CD4-positive, alpha-beta memory T cell (primary cell): ENCODE measurements at regions of chr9 and their contacts with region 1.

Region 1: DNA sequence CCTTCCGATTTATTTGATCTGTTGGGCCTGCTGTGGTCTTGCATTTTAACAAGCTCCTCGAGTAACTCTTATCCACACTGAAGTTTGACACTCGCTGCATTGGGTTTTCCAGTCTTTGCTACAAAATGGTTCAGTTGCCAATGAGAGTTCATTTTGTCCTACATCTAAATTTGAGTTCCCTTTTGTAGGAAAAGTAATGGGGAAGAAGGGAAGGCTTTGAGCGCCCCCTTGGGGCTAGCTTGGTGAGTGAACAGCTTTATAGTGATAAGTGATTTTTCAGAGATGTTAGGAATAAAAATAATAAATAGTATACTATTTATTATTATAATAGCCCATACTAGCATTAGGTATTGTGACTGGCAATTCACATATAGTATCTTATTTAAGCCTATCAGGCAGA is 89.9 kb upstream of the GNAQ start:
- DNase-seq: peak in 4 of 5 donors; percentile 44 to 56 (median 48)
- H3K4me3 ChIP-seq: no peak overlapping the region
- H3K4me3 Mint-ChIP-seq: no peak overlapping the region
- H3K27ac ChIP-seq: no peak overlapping the region
- H3K27ac Mint-ChIP-seq: peak overlapping the region; percentile 58 to 82 (median 69)
- H3K4me1 ChIP-seq: peaks cover 36% of the 10 kb centered on the region
- H3K4me1 Mint-ChIP-seq: peaks cover 30 to 53% (median 42%) of the 10 kb centered on the region in 4 donors
- H3K27me3 ChIP-seq: no peaks in the 10 kb centered on the region
- H3K27me3 Mint-ChIP-seq: no peaks in the 10 kb centered on the region

Region 2: GRCh38 chr9:77163884-77164283 is 957.6 kb before region 1 on chr9:
- CTCF ChIA-PET with region 1: no interaction called
- POLR2A ChIA-PET with region 1: no interaction called
- intact Hi-C with region 1: loop called (anchors 5 kb)
- DNase-seq: no peak
- H3K4me3 ChIP-seq: no peak overlapping the region
- H3K4me3 Mint-ChIP-seq: no peak overlapping the region
- H3K27ac ChIP-seq: no peak overlapping the region
- H3K27ac Mint-ChIP-seq: no peak overlapping the region
- H3K4me1 ChIP-seq: no peaks in the 10 kb centered on the region
- H3K4me1 Mint-ChIP-seq: peaks cover 0 to 4% (median 2%) of the 10 kb centered on the region in 4 donors
- H3K27me3 ChIP-seq: no peaks in the 10 kb centered on the region
- H3K27me3 Mint-ChIP-seq: peaks cover 5 to 7% of the 10 kb centered on the region in 2 donors

Region 3: GRCh38 chr9:77841739-77842386 is 279.6 kb before region 1 on chr9:
- CTCF ChIA-PET with region 1: interaction called, 15 read pairs
- POLR2A ChIA-PET with region 1: interaction called, 4 read pairs
- intact Hi-C with region 1: loop called (anchors 1 kb)
- DNase-seq: peak in 2 of 5 donors; percentile 3 to 9
- H3K4me3 ChIP-seq: no peak overlapping the region
- H3K4me3 Mint-ChIP-seq: no peak overlapping the region
- H3K27ac ChIP-seq: no peak overlapping the region
- H3K27ac Mint-ChIP-seq: peak overlapping the region in 2 of 7 donors; percentile 13 to 39
- H3K4me1 ChIP-seq: no peaks in the 10 kb centered on the region
- H3K4me1 Mint-ChIP-seq: peaks cover 7 to 23% (median 10%) of the 10 kb centered on the region in 4 donors
- H3K27me3 ChIP-seq: no peaks in the 10 kb centered on the region
- H3K27me3 Mint-ChIP-seq: no peaks in the 10 kb centered on the region

Region 4: GRCh38 chr9:77909306-77909705 is 212.2 kb before region 1 on chr9:
- CTCF ChIA-PET with region 1: no interaction called
- POLR2A ChIA-PET with region 1: no interaction called
- intact Hi-C with region 1: loop called (anchors 5 kb)
- DNase-seq: peak; percentile 34 to 64 (median 50)
- H3K4me3 ChIP-seq: peak overlapping the region in 1 of 2 donors; percentile 12
- H3K4me3 Mint-ChIP-seq: peak overlapping the region in 7 of 8 donors; percentile 49 to 83 (median 73)
- H3K27ac ChIP-seq: peak overlapping the region; percentile 3
- H3K27ac Mint-ChIP-seq: peak overlapping the region; percentile 55 to 93 (median 87)
- H3K4me1 ChIP-seq: peaks cover 41% of the 10 kb centered on the region
- H3K4me1 Mint-ChIP-seq: peaks cover 37 to 56% (median 53%) of the 10 kb centered on the region in 4 donors
- H3K27me3 ChIP-seq: no peaks in the 10 kb centered on the region
- H3K27me3 Mint-ChIP-seq: no peaks in the 10 kb centered on the region

Region 5: GRCh38 chr9:78074385-78075291 is 46.9 kb before region 1 on chr9:
- CTCF ChIA-PET with region 1: interaction called, 10 read pairs
- POLR2A ChIA-PET with region 1: interaction called, 14 read pairs
- intact Hi-C with region 1: loop called (anchors 2 kb)
- DNase-seq: peak; percentile 31 to 55 (median 48)
- H3K4me3 ChIP-seq: peak overlapping the region in 1 of 2 donors; percentile 44
- H3K4me3 Mint-ChIP-seq: peak overlapping the region; percentile 62 to 89 (median 80)
- H3K27ac ChIP-seq: peak overlapping the region; percentile 7
- H3K27ac Mint-ChIP-seq: peak overlapping the region; percentile 80 to 96 (median 91)
- H3K4me1 ChIP-seq: peaks cover 40% of the 10 kb centered on the region
- H3K4me1 Mint-ChIP-seq: peaks cover 45 to 60% (median 54%) of the 10 kb centered on the region in 4 donors
- H3K27me3 ChIP-seq: no peaks in the 10 kb centered on the region
- H3K27me3 Mint-ChIP-seq: no peaks in the 10 kb centered on the region

Region 6: DNA sequence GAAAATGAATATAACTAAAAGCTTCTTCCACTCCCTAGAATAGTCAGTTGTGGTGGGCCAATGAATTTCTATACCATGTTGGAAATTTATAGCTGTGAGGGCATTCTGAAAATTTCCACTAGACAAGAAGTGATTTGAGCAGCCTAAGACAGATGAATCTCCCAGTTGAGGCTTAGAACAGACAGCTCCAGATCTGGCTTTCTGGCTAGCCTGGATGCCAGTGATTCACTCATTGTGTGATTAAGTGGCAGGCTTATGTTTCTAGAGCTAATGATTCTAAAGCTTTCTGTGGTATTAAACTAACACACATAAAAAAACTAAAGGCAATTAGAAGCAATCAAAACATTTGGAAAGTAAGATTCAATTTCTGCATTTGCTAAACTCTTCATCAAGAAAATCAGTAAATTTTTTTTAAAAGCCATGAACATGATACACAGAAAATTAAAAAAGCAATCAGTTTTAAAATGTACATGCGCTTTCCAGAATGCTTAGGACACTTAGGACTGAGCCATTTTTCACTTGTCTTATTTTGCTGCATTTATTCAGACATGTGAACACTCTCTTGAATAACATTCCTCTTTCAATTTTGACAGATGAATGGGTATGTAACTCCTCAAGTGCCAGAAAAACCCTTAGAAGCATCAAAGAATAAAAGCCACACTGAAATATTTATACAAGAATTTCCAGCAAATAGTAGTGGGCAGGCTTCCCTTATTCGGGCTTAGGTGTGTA is 10.6 kb after region 1 on chr9:
- CTCF ChIA-PET with region 1: interaction called, 14 read pairs
- POLR2A ChIA-PET with region 1: no interaction called
- intact Hi-C with region 1: no loop called
- DNase-seq: no peak
- H3K4me3 ChIP-seq: peak overlapping the region; percentile 25 to 46
- H3K4me3 Mint-ChIP-seq: peak overlapping the region; percentile 12 to 88 (median 78)
- H3K27ac ChIP-seq: no peak overlapping the region
- H3K27ac Mint-ChIP-seq: peak overlapping the region; percentile 5 to 93 (median 88)
- H3K4me1 ChIP-seq: peaks cover 13% of the 10 kb centered on the region
- H3K4me1 Mint-ChIP-seq: peaks cover 10 to 14% (median 13%) of the 10 kb centered on the region in 4 donors
- H3K27me3 ChIP-seq: no peaks in the 10 kb centered on the region
- H3K27me3 Mint-ChIP-seq: peaks cover 0 to 5% of the 10 kb centered on the region in 2 donors

Region 7: GRCh38 chr9:78213712-78214111 is 92.2 kb after region 1 on chr9:
- CTCF ChIA-PET with region 1: interaction called, 11 read pairs
- POLR2A ChIA-PET with region 1: interaction called, 13 read pairs
- intact Hi-C with region 1: loop called (anchors 1 kb)
- DNase-seq: peak in 4 of 5 donors; percentile 29 to 44 (median 38)
- H3K4me3 ChIP-seq: no peak overlapping the region
- H3K4me3 Mint-ChIP-seq: peak overlapping the region in 4 of 8 donors; percentile 21 to 56 (median 44)
- H3K27ac ChIP-seq: no peak overlapping the region
- H3K27ac Mint-ChIP-seq: peak overlapping the region in 3 of 7 donors; percentile 30 to 65 (median 44)
- H3K4me1 ChIP-seq: peaks cover 37% of the 10 kb centered on the region
- H3K4me1 Mint-ChIP-seq: peaks cover 32 to 47% (median 37%) of the 10 kb centered on the region in 4 donors
- H3K27me3 ChIP-seq: no peaks in the 10 kb centered on the region
- H3K27me3 Mint-ChIP-seq: no peaks in the 10 kb centered on the region